H1 (cell line): ENCODE measurements at regions of chr7 and their contacts with region 1.

Region 1: GRCh38 chr7:133434055-133434865 is 181.4 kb downstream of the EXOC4 start:
- DNase-seq: no peak
- H3K4me3 ChIP-seq: no peak overlapping the region
- H3K27ac ChIP-seq: no peak overlapping the region
- H3K4me1 ChIP-seq: peaks cover 0 to 6% (median 3%) of the 10 kb centered on the region in 4 experiments; a peak in 4 of 7 replicates
- H3K27me3 ChIP-seq: no peaks in the 10 kb centered on the region
- CTCF ChIP-seq: peak in 2 of 3 experiments; percentile 49 to 50; a peak in 2 of 4 replicates
- EP300 ChIP-seq: no peak
- POLR2A ChIP-seq: no peak
- RAD21 ChIP-seq: peak; percentile 79 to 82

Region 2: GRCh38 chr7:133275008-133275407 is 159.3 kb before region 1 on chr7:
- CTCF ChIA-PET with region 1: interaction called, 14 read pairs
- POLR2A ChIA-PET with region 1: no interaction called
- DNase-seq: no peak
- H3K4me3 ChIP-seq: no peak overlapping the region
- H3K27ac ChIP-seq: no peak overlapping the region
- H3K4me1 ChIP-seq: no peaks in the 10 kb centered on the region
- H3K27me3 ChIP-seq: no peaks in the 10 kb centered on the region
- CTCF ChIP-seq: peak in 2 of 3 experiments; percentile 35 to 50; a peak in 2 of 4 replicates
- EP300 ChIP-seq: no peak
- POLR2A ChIP-seq: no peak
- RAD21 ChIP-seq: peak; percentile 63 to 64

Region 3: DNA sequence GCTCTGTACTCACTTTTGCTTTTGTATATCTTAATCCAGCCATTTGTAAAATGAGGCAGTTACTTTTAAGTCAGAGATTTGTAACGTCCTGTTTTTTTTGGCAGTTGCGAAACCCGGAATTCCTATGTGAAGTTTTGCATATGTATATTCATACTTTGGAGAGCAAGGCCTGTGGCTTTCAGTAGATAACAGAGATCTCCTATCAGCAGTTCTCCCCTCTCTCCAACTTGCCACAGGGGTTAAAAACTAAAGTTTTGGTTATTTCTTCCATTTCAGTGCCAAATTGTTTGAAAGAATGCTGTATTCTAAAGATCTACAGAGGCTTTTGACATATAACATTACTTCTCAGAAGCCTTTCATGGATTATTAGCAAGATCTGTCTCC is 78.9 kb before region 1 on chr7:
- CTCF ChIA-PET with region 1: no interaction called
- POLR2A ChIA-PET with region 1: no interaction called
- DNase-seq: no peak
- H3K4me3 ChIP-seq: no peak overlapping the region
- H3K27ac ChIP-seq: no peak overlapping the region
- H3K4me1 ChIP-seq: peaks cover 0 to 6% (median 4%) of the 10 kb centered on the region in 4 experiments; a peak in 5 of 7 replicates
- H3K27me3 ChIP-seq: no peaks in the 10 kb centered on the region
- CTCF ChIP-seq: no peak
- EP300 ChIP-seq: no peak
- POLR2A ChIP-seq: no peak
- RAD21 ChIP-seq: no peak

Region 4: DNA sequence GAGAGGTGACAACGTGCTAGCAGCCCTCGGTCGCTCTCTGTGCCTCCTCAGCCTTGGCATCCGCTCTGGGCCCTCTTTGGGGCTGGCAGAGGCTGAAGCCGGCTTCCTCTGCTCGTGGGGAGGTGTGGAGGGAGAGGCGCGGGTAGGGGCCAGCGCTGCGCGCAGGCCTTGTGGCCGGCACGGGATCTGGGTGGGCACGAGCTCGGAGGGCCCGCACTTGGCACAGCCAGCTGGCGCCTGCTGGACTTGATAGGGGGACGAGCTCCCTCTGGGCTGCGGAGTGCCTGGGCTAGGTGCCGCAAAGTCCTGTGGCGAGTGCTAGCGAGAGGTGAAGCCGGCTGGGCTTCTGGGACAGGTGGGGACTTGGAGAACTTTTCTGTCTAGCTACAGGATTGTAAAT is 10.6 kb before region 1 on chr7:
- CTCF ChIA-PET with region 1: interaction called, 23 read pairs
- POLR2A ChIA-PET with region 1: no interaction called
- DNase-seq: no peak
- H3K4me3 ChIP-seq: no peak overlapping the region
- H3K27ac ChIP-seq: no peak overlapping the region
- H3K4me1 ChIP-seq: peaks cover 0 to 10% (median 4%) of the 10 kb centered on the region in 4 experiments; a peak in 3 of 7 replicates
- H3K27me3 ChIP-seq: no peaks in the 10 kb centered on the region
- CTCF ChIP-seq: no peak
- EP300 ChIP-seq: no peak
- POLR2A ChIP-seq: no peak
- RAD21 ChIP-seq: no peak